Panc1 (cell line): ENCODE measurements at regions of chr7 and their contacts with region 1.

Region 1: DNA sequence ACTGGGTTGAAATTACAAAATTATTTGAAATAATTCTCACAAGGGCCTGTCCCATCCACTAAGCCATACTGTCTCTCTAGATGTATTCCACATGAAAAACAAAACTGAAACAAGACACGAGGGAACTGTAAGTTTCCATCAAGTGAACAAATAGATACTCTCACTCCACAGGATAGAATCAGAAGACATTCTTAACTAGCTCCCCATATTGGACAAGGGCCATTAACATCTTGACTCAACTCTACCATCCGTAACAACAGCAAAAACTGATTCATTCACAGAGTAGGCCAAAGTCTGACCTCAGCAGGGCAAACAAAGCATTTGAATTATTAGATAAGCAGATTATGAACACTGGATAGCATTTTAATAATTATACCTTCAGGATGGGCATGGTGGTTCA is 29.1 kb downstream of the UBE2H start:
- DNase-seq: no peak
- ATAC-seq: peak; percentile 42; the same call in 1 of the 2 replicates
- H3K4me3 ChIP-seq: no peak overlapping the region
- H3K27ac ChIP-seq: no peak overlapping the region
- H3K4me1 ChIP-seq: peaks cover 5% of the 10 kb centered on the region; the same call in 1 of the 2 replicates
- H3K27me3 ChIP-seq: no peaks in the 10 kb centered on the region
- CTCF ChIP-seq: no peak

Region 2: GRCh38 chr7:129359638-129360037 is 564.1 kb before region 1 on chr7:
- CTCF ChIA-PET with region 1: no interaction called
- POLR2A ChIA-PET with region 1: interaction called, 14 read pairs
- in situ Hi-C with region 1: no loop called
- intact Hi-C with region 1: no loop called
- DNase-seq: no peak
- ATAC-seq: no peak
- H3K4me3 ChIP-seq: no peak overlapping the region
- H3K27ac ChIP-seq: no peak overlapping the region
- H3K4me1 ChIP-seq: no peaks in the 10 kb centered on the region
- H3K27me3 ChIP-seq: no peaks in the 10 kb centered on the region
- CTCF ChIP-seq: no peak

Region 3: GRCh38 chr7:129969807-129970446 is 46.2 kb after region 1 on chr7:
- CTCF ChIA-PET with region 1: interaction called, 10 read pairs
- POLR2A ChIA-PET with region 1: no interaction called
- in situ Hi-C with region 1: no loop called
- intact Hi-C with region 1: no loop called
- DNase-seq: peak; percentile 77
- ATAC-seq: peak; percentile 75
- H3K4me3 ChIP-seq: no peak overlapping the region
- H3K27ac ChIP-seq: peak overlapping the region; percentile 64
- H3K4me1 ChIP-seq: peaks cover 8% of the 10 kb centered on the region
- H3K27me3 ChIP-seq: no peaks in the 10 kb centered on the region
- CTCF ChIP-seq: no peak

Region 4: DNA sequence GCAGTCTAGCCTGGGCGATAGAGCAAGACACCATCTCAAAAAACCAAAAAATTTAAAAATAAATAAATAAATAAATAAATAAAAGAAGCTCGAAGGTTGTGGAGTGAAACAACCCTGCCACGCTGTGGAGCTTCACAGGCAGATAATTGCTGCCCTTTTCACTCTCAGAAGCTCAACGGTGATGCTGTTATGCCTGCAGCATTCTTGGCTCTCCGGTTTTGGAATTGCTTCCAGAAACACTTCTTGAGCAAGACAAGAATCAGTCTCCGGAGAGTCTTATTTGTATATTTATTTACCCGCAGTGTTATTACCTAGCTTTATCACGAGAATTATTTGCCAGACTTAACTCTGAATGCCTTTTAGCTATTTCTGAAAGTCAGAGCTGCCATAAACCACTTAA is 69.6 kb after region 1 on chr7:
- CTCF ChIA-PET with region 1: no interaction called
- POLR2A ChIA-PET with region 1: interaction called, 11 read pairs
- in situ Hi-C with region 1: no loop called
- intact Hi-C with region 1: no loop called
- DNase-seq: no peak
- ATAC-seq: no peak
- H3K4me3 ChIP-seq: no peak overlapping the region
- H3K27ac ChIP-seq: no peak overlapping the region
- H3K4me1 ChIP-seq: no peaks in the 10 kb centered on the region
- H3K27me3 ChIP-seq: no peaks in the 10 kb centered on the region
- CTCF ChIP-seq: no peak